ENCODE measurements at regions of chr7 and their contacts with region 1.

Region 1: GRCh38 chr7:24401628-24402593 is 117.9 kb downstream of the NPY start:
- DNase-seq: no peak
- H3K4me3 ChIP-seq: no peak overlapping the region
- H3K27ac ChIP-seq: no peak overlapping the region
- H3K4me1 ChIP-seq: no peaks in the 10 kb centered on the region
- H3K27me3 ChIP-seq: no peaks in the 10 kb centered on the region
- CTCF ChIP-seq: peak in 3 of 6 experiments; percentile 51 to 70 (median 69)
- POLR2A ChIP-seq: no peak

Region 2: DNA sequence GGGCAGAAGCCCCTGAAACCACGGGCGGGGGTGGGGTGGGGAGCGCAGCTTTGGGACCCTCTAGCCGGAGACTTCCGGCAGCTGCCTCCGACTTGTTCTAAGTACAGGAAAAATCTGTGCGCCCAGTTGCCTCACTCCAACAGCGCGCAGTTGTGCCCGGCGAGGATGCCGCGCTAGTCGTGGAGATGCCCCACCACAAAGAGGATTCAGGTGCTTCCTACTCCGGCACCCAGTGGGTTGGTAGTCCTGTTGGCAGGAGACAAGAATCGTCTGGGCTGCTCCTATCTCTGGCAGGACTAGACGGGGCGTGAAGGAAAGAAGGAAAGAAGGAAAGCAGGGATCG is 118.4 kb before region 1 on chr7:
- intact Hi-C with region 1: no loop called
- DNase-seq: peak in 1 of 2 donors; percentile 8
- H3K4me3 ChIP-seq: peak overlapping the region in 1 of 3 donors; percentile 21
- H3K27ac ChIP-seq: no peak overlapping the region
- H3K4me1 ChIP-seq: peaks cover 5 to 17% of the 10 kb centered on the region in 2 donors
- H3K27me3 ChIP-seq: peaks cover 10% of the 10 kb centered on the region
- CTCF ChIP-seq: no peak
- POLR2A ChIP-seq: no peak

Region 3: DNA sequence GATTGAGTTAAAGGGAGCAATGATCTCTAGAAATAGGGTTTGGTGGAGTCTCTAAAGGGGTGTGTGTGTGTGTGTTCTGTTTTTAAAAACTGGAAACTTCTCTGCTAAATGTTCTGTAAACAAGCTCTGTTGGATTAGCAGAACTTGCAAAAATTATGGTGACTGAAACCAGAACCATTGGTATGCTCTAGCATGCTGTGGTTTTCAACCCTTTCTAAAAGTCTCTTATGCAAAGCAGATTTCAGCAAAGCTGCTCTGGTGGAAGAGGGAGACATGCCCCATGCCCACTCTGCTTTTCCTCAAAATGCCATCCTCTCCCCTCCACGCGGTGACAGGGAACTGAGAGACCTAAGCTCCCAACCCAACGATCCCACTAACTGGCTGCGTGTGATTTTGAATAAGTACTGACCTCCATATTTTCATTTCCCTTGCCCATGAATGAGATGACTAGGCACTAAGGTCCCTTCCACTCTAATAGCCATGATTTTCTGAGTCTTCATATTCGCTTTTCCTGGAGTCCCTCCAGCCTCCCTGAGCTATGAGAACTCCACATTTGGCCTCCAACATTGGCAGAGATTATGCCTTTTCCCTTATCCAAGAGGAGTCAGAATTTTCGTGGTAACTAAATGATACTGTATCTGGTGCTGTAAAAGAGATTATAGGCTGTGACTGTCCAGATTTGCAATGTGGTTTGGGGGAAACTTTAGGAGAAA is 54.1 kb after region 1 on chr7:
- intact Hi-C with region 1: no loop called
- DNase-seq: no peak
- H3K4me3 ChIP-seq: no peak overlapping the region
- H3K27ac ChIP-seq: no peak overlapping the region
- H3K4me1 ChIP-seq: peaks cover 0 to 9% of the 10 kb centered on the region in 2 donors
- H3K27me3 ChIP-seq: no peaks in the 10 kb centered on the region
- CTCF ChIP-seq: no peak
- POLR2A ChIP-seq: no peak

Region 4: GRCh38 chr7:24660546-24660945 is 258.6 kb after region 1 on chr7:
- intact Hi-C with region 1: loop called (anchors 5 kb)
- DNase-seq: no peak
- H3K4me3 ChIP-seq: no peak overlapping the region
- H3K27ac ChIP-seq: no peak overlapping the region
- H3K4me1 ChIP-seq: no peaks in the 10 kb centered on the region
- H3K27me3 ChIP-seq: no peaks in the 10 kb centered on the region
- CTCF ChIP-seq: no peak
- POLR2A ChIP-seq: no peak

Measured in thyroid gland (tissue), 4 donors.